ENCODE measurements at regions of chr9 and their contacts with region 1.

Region 1: DNA sequence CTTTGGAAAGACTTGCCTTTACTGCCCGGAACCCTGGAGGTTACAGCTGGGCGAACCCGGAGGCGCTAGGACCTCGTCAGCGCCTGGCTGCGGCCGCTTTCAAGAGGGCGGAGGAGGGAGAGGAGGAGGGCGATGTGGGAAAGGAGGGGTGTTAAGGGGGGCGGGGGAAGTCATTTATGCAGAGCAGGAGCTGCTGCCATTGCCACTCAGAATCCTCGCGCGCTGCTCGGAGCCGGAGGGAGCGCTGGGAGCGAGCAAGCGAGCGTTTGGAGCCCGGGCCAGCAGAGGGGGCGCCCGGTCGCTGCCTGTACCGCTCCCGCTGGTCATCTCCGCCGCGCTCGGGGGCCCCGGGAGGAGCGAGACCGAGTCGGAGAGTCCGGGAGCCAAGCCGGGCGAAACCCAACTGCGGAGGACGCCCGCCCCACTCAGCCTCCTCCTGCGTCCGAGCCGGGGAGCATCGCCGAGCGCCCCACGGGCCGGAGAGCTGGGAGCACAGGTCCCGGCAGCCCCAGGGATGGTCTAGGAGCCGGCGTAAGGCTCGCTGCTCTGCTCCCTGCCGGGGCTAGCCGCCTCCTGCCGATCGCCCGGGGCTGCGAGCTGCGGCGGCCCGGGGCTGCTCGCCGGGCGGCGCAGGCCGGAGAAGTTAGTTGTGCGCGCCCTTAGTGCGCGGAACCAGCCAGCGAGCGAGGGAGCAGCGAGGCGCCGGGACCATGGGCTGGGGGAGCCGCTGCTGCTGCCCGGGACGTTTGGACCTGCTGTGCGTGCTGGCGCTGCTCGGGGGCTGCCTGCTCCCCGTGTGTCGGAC is at the start of gene PCSK5:
- DNase-seq: peak; percentile 65 to 94 (median 90)
- ATAC-seq: peak; percentile 95
- H3K4me3 ChIP-seq: peak within 1 kb of the TSS; percentile 70
- H3K4me3 Mint-ChIP-seq: peak within 1 kb of the TSS; percentile 91 to 99 (median 97)
- H3K27ac ChIP-seq: peak within 1 kb of the TSS; percentile 77
- H3K27ac Mint-ChIP-seq: peak within 1 kb of the TSS; percentile 81 to 95 (median 90)
- H3K4me1 ChIP-seq: peaks cover 0 to 15% of the 10 kb centered on the region in 2 donors
- H3K4me1 Mint-ChIP-seq: peaks cover 35 to 59% (median 49%) of the 10 kb centered on the region in 7 donors
- H3K27me3 ChIP-seq: no peaks in the 10 kb centered on the region
- H3K27me3 Mint-ChIP-seq: peaks cover 0 to 50% (median 0%) of the 10 kb centered on the region in 5 donors
- total RNA-seq, gene PCSK5: 5.2 to 35.0 (median 24.6) TPM

Region 2: GRCh38 chr9:74952281-74953151 is 938.2 kb before region 1 on chr9 and contains the start of gene C9orf40:
- CTCF ChIA-PET with region 1: no interaction called
- POLR2A ChIA-PET with region 1: no interaction called
- intact Hi-C with region 1: loop called in 1 of 2 experiments (anchors 1 kb)
- DNase-seq: peak; percentile 80 to 92 (median 88)
- ATAC-seq: peak; percentile 93
- H3K4me3 ChIP-seq: peak within 1 kb of the TSS; percentile 89
- H3K4me3 Mint-ChIP-seq: peak within 1 kb of the TSS; percentile 87 to 99 (median 97)
- H3K27ac ChIP-seq: peak within 1 kb of the TSS; percentile 86
- H3K27ac Mint-ChIP-seq: peak within 1 kb of the TSS; percentile 89 to 97 (median 95)
- H3K4me1 ChIP-seq: peaks cover 0 to 7% of the 10 kb centered on the region in 2 donors
- H3K4me1 Mint-ChIP-seq: peaks cover 0 to 46% (median 30%) of the 10 kb centered on the region in 7 donors
- H3K27me3 ChIP-seq: no peaks in the 10 kb centered on the region
- H3K27me3 Mint-ChIP-seq: no peaks in the 10 kb centered on the region
- total RNA-seq, gene C9orf40: 1.8 to 13.6 (median 6.6) TPM

Region 3: DNA sequence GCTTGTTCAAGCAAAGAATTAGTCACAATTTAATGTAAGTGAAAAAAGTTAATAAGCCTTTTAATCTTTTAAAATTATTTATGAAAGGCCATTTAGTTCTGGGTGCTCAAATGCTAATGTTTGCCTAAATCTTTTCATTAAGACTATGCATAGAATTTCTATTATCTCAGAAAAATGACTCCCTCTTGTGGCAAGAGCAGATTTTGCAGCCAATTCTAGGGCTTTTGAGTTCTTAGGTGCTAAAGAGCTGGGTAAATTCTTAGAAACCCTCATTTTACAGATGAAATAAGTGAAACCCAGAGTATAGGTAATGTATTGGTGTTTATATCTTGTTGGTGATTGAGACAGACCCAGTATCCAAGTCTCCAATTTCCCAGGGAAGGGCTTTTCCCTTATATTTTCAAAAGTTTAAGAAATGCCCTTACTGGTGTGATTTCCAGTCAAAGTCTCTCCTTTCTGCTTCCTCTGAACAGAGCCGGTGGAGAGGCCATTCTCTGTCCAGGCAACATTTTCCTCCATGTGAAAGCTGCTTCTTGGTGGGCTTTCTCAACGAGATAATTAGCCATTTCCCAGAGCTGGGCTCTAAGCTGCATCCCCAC is 24.3 kb before region 1 on chr9:
- CTCF ChIA-PET with region 1: interaction called, 3 read pairs
- POLR2A ChIA-PET with region 1: interaction called, 6 read pairs
- intact Hi-C with region 1: loop called in 1 of 2 experiments (anchors 1 kb)
- DNase-seq: peak in 6 of 9 donors; percentile 18 to 61 (median 52)
- ATAC-seq: peak; percentile 61
- H3K4me3 ChIP-seq: no peak overlapping the region
- H3K4me3 Mint-ChIP-seq: no peak overlapping the region
- H3K27ac ChIP-seq: no peak overlapping the region
- H3K27ac Mint-ChIP-seq: no peak overlapping the region
- H3K4me1 ChIP-seq: peaks cover 0 to 18% of the 10 kb centered on the region in 2 donors
- H3K4me1 Mint-ChIP-seq: peaks cover 0 to 33% (median 23%) of the 10 kb centered on the region in 7 donors
- H3K27me3 ChIP-seq: no peaks in the 10 kb centered on the region
- H3K27me3 Mint-ChIP-seq: peaks cover 0 to 4% (median 0%) of the 10 kb centered on the region in 5 donors

Region 4: DNA sequence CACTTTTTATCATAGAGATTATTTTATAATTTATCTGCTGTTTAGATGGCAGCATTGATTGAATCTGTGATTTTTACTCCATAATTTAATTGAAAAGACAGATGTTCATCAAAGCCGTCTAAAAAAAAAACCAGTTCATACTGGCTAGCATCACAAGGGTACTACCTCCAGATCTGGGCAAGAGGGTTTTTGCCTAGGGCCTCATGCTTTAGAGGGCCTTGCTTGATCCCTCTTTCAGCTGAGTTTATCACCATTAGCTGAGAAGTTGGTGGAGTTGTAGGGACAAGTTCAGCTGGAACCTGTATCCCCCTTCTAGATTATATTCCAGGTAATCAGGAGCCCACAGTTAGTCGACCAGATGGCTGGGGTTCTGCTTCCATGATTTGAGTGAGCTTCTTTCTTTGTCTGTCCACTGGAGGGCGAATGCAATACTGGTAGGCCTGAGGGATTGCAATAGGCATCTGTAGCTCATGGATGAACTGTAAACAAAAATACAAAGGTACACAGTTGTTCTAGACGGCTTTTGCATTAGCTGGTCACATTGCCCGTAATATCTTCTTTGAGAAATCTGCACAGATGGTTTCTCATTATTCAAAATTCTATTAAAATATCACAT is 88.6 kb after region 1 on chr9:
- CTCF ChIA-PET with region 1: interaction called, 3 read pairs
- POLR2A ChIA-PET with region 1: no interaction called
- intact Hi-C with region 1: loop called in 1 of 2 experiments (anchors 5 kb)
- DNase-seq: no peak
- ATAC-seq: no peak
- H3K4me3 ChIP-seq: no peak overlapping the region
- H3K4me3 Mint-ChIP-seq: peak overlapping the region in 1 of 10 donors; percentile 2
- H3K27ac ChIP-seq: no peak overlapping the region
- H3K27ac Mint-ChIP-seq: no peak overlapping the region
- H3K4me1 ChIP-seq: peaks cover 0 to 9% of the 10 kb centered on the region in 2 donors
- H3K4me1 Mint-ChIP-seq: peaks cover 4 to 75% (median 67%) of the 10 kb centered on the region in 7 donors
- H3K27me3 ChIP-seq: no peaks in the 10 kb centered on the region
- H3K27me3 Mint-ChIP-seq: no peaks in the 10 kb centered on the region

Region 5: DNA sequence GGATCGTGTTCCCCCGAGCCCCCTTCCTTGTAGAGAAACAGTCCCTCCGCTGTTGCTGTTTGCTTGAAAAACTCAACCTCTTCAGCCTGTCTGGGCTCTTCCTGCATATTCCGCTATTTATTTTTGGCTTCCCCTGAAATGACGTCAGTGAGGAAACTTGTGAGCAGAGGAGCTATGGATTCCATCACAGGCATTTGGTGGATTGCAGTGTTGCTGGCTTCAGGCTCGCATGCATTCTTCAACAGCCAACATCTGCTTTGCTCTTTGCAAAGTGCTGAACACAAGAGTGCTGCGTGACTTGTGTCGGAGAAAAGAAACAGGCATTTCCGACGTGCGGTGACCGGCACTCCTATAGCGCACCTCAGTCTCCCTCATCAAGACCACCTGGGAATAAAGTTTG is 270.9 kb after region 1 on chr9:
- CTCF ChIA-PET with region 1: no interaction called
- POLR2A ChIA-PET with region 1: interaction called, 3 read pairs
- intact Hi-C with region 1: loop called in 1 of 2 experiments (anchors 5 kb)
- DNase-seq: no peak
- ATAC-seq: no peak
- H3K4me3 ChIP-seq: no peak overlapping the region
- H3K4me3 Mint-ChIP-seq: no peak overlapping the region
- H3K27ac ChIP-seq: no peak overlapping the region
- H3K27ac Mint-ChIP-seq: no peak overlapping the region
- H3K4me1 ChIP-seq: no peaks in the 10 kb centered on the region
- H3K4me1 Mint-ChIP-seq: peaks cover 0 to 11% (median 8%) of the 10 kb centered on the region in 7 donors
- H3K27me3 ChIP-seq: no peaks in the 10 kb centered on the region
- H3K27me3 Mint-ChIP-seq: no peaks in the 10 kb centered on the region

Region 6: GRCh38 chr9:76658535-76659231 is 768.0 kb after region 1 on chr9:
- CTCF ChIA-PET with region 1: no interaction called
- POLR2A ChIA-PET with region 1: no interaction called
- intact Hi-C with region 1: loop called in 1 of 2 experiments (anchors 10 kb)
- DNase-seq: peak in 4 of 9 donors; percentile 21 to 44 (median 25)
- ATAC-seq: peak; percentile 86
- H3K4me3 ChIP-seq: no peak overlapping the region
- H3K4me3 Mint-ChIP-seq: no peak overlapping the region
- H3K27ac ChIP-seq: no peak overlapping the region
- H3K27ac Mint-ChIP-seq: no peak overlapping the region
- H3K4me1 ChIP-seq: peaks cover 0 to 13% of the 10 kb centered on the region in 2 donors
- H3K4me1 Mint-ChIP-seq: peaks cover 0 to 52% (median 12%) of the 10 kb centered on the region in 7 donors
- H3K27me3 ChIP-seq: no peaks in the 10 kb centered on the region
- H3K27me3 Mint-ChIP-seq: peaks cover 0 to 18% (median 0%) of the 10 kb centered on the region in 5 donors

Measured in naive thymus-derived CD4-positive, alpha-beta T cell (primary cell).